HAP-1 (cell line): ENCODE measurements at regions of chr7 and their contacts with region 1.

Region 1: DNA sequence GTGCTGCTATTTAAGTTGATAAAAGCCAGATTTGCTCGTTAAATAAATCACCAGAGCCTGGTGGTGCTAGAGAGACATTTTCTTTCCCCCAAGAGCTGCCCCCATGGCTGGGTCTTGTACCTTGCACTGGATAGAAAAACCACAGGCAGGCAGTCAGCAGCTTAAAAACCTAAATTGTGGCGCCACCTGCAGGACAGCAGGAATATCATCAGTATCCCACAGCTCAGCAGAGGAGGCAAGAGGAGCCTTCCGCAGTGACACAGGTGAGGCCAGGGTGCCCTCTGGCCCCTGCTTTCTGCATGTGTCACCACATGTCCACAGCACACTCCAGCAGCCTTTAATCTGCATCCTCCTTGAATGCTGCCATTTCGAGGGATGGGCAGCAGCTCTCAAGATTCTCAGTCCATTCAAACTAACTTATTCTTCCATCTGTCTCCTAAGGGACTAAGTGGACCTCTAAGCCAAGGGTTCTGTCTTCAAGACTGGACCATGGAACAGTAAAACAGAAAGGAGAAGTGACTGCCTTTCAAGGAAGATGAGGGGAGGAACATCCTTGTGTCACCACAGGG is 4.5 kb upstream of the PLXNA4 start:
- DNase-seq: peak; percentile 59 to 75
- H3K4me3 ChIP-seq: no peak overlapping the region
- H3K4me1 ChIP-seq: no peaks in the 10 kb centered on the region
- H3K27me3 ChIP-seq: peaks cover 34% of the 10 kb centered on the region

Region 2: GRCh38 chr7:131688738-131689661 is 891.8 kb before region 1 on chr7:
- in situ Hi-C with region 1: loop called (anchors 25 kb)
- DNase-seq: peak; percentile 50 to 84
- H3K4me3 ChIP-seq: no peak overlapping the region
- H3K4me1 ChIP-seq: 0 out of 2 replicates have a peak, but pooled peaks cover 2% of the 10 kb centered on the region
- H3K27me3 ChIP-seq: peaks cover 42% of the 10 kb centered on the region

Region 3: DNA sequence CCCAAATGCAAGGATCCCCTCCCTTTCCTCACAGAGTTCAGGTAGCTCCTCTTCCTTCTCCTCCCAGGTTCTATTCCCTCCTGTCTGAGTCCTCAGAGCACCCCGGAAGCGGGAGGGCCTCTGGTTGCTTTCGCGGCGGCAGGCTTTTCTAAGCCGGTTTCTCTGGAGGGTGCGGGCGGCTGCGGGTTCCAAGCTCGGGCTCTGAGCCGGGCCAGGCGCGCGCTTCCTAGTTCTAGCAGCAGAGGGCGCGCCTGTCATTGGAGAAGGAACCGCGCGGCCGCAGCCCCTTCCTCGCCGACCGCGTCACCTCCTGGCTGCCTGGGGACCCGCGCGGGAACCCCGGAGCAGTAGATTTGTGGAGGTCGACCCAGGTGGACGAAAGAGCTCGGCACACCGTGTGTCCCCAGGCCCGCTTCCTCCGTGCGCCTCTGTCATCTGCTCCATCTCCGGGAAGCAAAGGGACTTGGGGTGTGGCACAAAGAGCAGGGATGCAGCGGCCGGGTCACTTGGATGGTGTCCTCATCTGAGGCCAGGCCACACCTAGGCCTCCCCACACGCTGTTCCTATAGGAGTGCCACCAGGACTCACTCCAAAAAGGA is 635.4 kb before region 1 on chr7:
- in situ Hi-C with region 1: loop called (anchors 10 kb)
- DNase-seq: peak; percentile 32 to 75
- H3K4me3 ChIP-seq: no peak overlapping the region
- H3K4me1 ChIP-seq: no peaks in the 10 kb centered on the region
- H3K27me3 ChIP-seq: peaks cover 21% of the 10 kb centered on the region

Region 4: DNA sequence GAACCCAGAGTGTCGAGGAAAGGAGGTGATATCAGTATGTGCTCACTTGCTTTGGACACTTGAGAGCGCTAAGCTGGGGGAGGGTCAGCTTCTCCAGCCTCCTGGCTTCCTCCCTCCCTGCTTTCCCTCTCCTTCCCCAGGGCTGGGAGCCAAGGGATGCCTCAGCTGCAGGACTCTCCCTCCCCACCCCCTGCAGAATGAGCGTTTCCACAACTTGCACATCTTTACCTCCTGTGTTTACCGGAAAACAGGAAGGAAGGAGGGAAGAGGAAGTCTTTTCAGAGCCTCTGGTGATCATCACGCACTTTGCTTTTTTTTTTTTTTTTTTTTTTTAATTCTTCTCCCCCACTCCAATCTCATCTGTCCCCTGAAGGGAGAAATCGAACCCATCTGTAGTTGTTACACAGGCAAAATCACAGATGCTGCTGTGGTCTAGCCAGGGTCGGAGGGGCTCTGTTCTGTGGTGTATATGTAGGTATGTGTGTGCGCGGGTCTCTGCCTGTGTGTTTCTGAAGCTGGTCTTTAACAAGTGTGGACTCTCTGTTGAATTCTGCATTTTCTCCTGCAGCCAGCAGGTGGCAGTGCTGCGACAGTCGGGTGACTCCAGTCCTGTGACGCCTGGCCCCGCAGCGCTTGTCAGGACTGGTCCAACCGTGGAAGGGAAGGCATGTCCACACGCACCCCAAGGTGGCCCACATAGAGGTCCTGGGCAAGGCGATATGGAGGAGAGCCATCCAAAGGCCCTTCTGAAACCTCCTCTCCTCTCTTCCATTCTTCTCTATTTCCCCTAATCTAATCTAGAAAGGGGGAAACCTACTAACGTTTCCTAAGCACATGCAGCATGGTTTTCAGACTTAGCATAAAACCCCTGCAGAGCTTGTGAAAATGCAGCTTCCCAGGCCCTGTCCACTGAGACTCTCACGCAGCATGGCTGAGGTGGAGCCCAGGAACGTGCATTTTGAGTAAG is 262.2 kb before region 1 on chr7:
- in situ Hi-C with region 1: loop called (anchors 5 kb)
- DNase-seq: peak; percentile 73 to 83
- H3K4me3 ChIP-seq: no peak overlapping the region
- H3K4me1 ChIP-seq: no peaks in the 10 kb centered on the region
- H3K27me3 ChIP-seq: peaks cover 7% of the 10 kb centered on the region